Sciatic nerve (tissue), 2 donors: ENCODE measurements at regions of chr17 and their contacts with region 1.

Region 1: DNA sequence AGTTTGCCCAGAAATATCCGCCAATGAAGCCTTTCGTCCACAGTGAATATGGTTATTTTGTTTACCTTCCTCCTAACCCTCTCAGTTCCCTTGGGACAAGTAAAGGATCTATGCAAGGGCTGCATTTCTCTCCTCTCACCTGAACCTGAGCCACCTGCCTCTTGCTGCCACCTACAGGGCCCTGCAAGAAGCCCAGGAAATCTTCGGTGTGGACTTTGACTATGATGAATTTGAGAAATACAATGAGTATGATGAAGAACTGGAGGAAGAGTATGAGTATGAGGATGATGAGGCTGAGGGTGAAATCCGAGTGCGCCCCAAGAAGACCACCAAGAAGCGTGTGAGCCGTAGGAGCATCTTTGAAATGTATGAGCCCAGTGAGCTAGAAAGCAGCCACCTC is 14.0 kb downstream of the SUPT6H start:
- DNase-seq: no peak
- ATAC-seq: no peak

Region 2: GRCh38 chr17:28494445-28495188 is 181.4 kb before region 1 on chr17:
- intact Hi-C with region 1: no loop called
- DNase-seq: peak; percentile 79
- ATAC-seq: peak; percentile 69

Region 3: GRCh38 chr17:28598799-28599310 is 77.1 kb before region 1 on chr17 and contains the start of gene SPAG5:
- intact Hi-C with region 1: no loop called
- DNase-seq: peak; percentile 93
- ATAC-seq: peak; percentile 100
- total RNA-seq, gene SPAG5: 20.9 TPM

Region 4: DNA sequence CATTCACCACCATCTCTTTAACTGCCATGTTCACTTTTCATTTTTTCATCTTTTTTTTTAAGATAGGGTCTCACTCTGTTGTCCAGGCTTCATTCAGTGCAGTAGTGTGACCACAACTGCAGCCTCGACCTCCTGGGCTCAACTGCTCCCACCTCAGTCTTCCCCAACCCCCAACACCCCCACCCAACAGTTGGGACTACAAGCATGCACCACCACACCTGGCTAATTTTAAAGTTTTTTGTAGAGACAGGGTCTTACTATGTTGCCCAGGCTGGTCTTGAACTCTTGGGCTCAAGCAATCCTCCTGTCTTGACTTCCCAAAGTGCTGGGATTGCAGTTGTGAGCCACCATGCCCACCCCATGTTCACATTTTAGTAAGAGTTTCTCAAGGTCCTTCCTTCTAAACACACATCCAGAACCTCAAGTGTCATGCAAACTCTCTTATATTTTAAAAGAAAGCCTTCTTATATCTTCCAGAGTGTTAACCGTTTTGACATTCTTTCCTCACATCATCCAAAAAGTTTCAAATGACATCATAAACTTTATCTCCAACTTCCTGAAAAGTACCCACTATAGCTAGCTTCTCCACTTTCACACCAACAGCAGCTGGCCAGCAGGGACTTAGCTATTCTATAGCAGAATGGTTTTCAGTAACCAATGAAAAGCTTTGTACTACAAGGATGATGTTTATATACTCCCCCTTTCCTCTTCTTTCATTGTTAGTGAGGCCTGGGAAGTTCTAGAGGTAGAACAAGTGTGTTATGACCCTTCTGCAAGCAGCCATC is 117.1 kb after region 1 on chr17:
- intact Hi-C with region 1: loop called (anchors 5 kb)
- DNase-seq: no peak
- ATAC-seq: no peak